ENCODE measurements at regions of chr22 and their contacts with region 1.

Region 1: DNA sequence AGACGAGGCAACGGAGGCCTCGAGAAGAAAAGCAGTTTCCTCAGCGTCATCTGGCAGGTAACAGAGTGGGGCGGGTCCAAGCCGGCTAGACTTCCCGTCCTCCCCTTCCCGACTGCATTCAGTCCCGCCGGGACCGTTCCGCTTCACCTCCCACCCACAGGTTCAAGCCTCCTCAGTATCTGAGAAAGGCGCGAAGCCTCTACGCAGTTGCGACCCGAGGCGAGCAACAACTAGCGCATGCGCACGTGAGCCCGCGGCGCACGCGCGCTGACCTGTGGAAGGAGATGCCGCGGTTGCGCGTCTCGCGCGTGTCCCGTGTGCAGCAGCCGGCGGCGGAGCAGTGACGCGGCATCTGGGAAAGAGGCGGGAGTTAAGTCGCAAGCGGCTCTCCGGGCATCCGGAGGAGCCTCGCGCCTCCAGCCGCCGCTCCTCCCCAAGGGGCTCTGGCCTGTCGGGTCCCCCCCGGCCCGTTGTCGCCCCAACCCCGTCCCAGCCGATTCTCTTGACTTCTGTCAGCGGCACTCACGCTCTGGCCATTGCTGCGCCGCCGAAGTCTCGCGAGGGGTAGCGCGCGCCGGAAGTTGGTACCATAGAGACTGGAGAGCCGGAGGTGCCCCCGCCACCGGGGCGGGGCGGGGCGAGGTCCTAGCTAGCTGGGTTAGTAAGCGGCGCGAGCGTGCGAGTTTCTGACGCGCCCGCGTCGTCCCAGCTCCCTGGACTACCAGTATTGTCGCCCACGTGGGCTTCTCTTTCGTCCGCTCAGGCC is at the start of gene THAP7:
- DNase-seq: peak; percentile 97
- H3K4me3 Mint-ChIP-seq: peak within 1 kb of the TSS; percentile 89
- H3K27ac Mint-ChIP-seq: peak within 1 kb of the TSS; percentile 96
- H3K4me1 Mint-ChIP-seq: peaks cover 28% of the 10 kb centered on the region
- H3K27me3 Mint-ChIP-seq: no peaks in the 10 kb centered on the region
- total RNA-seq, gene THAP7: 20.4 to 21.2 TPM

Region 2: GRCh38 chr22:20858615-20859416 is 142.9 kb before region 1 on chr22 and contains the starts of genes PI4KA and SNAP29:
- CTCF ChIA-PET with region 1: interaction called, 3 read pairs
- intact Hi-C with region 1: loop called (anchors 1 kb)
- DNase-seq: peak; percentile 99
- H3K4me3 Mint-ChIP-seq: peak within 1 kb of the TSS; percentile 90
- H3K27ac Mint-ChIP-seq: peak within 1 kb of the TSS; percentile 77
- H3K4me1 Mint-ChIP-seq: peaks cover 46% of the 10 kb centered on the region
- H3K27me3 Mint-ChIP-seq: no peaks in the 10 kb centered on the region
- total RNA-seq, gene PI4KA: 55.0 to 63.7 TPM
- total RNA-seq, gene SNAP29: 22.1 to 24.2 TPM

Region 3: DNA sequence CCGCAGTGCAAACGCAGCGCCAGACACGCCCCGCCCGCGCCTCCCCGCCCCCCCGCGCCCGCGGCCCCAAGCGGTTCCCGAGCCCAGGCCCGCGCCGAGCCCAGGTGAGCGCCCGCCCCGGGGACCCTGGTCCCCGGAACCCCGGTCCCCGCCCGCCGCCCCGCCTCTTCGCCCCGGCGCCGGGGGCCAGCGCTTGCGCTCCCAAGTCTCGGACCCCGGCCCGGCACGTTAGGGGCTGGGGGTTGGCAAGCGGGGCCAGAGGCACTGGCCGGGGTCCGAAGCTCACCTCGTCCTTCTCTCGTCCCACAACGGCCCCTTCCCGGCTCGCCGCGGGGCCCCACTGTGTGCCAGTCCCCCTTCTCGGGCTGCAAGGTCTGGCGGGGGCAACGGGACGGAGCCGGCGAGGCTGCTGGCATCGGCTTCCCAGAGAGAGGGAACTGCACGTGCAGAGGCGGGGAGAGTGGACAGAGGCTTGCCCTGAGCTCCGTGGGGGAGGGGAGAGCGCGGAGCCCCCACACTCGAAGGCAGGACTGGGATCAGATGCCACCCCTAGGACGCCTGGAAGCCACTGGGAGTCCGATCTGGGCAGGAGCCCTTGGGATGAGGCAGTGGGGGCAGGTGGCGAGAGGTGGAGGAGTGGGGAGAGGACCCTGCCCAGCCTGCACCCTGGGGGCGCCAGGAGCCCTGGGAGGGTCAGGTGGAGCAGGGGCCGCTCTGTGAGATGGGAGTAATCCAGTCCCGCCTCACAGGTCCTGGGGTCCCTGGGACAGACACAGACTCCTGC is 36.4 kb before region 1 on chr22:
- CTCF ChIA-PET with region 1: interaction called, 3 read pairs
- intact Hi-C with region 1: loop called (anchors 5 kb)
- DNase-seq: no peak
- H3K4me3 Mint-ChIP-seq: no peak overlapping the region
- H3K27ac Mint-ChIP-seq: no peak overlapping the region
- H3K4me1 Mint-ChIP-seq: peaks cover 11% of the 10 kb centered on the region
- H3K27me3 Mint-ChIP-seq: peaks cover 3% of the 10 kb centered on the region

Region 4: GRCh38 chr22:21014202-21014725 is 12.5 kb after region 1 on chr22:
- CTCF ChIA-PET with region 1: interaction called, 3 read pairs
- intact Hi-C with region 1: loop called (anchors 1 kb)
- DNase-seq: peak; percentile 80
- H3K4me3 Mint-ChIP-seq: peak overlapping the region; percentile 74
- H3K27ac Mint-ChIP-seq: no peak overlapping the region
- H3K4me1 Mint-ChIP-seq: peaks cover 25% of the 10 kb centered on the region
- H3K27me3 Mint-ChIP-seq: no peaks in the 10 kb centered on the region

Region 5: GRCh38 chr22:21867528-21868266 is 866.0 kb after region 1 on chr22 and contains the start of gene MAPK1:
- CTCF ChIA-PET with region 1: no interaction called
- intact Hi-C with region 1: loop called (anchors 10 kb)
- DNase-seq: peak; percentile 94
- H3K4me3 Mint-ChIP-seq: peak within 1 kb of the TSS; percentile 91
- H3K27ac Mint-ChIP-seq: peak within 1 kb of the TSS; percentile 97
- H3K4me1 Mint-ChIP-seq: peaks cover 44% of the 10 kb centered on the region
- H3K27me3 Mint-ChIP-seq: no peaks in the 10 kb centered on the region
- total RNA-seq, gene MAPK1: 74.0 to 82.6 TPM

Measured in activated naive CD4-positive, alpha-beta T cell treated with anti-CD3 and anti-CD28 coated beads for 36 hours (primary cell).